ENCODE measurements at regions of chr3 and their contacts with region 1.

Region 1: DNA sequence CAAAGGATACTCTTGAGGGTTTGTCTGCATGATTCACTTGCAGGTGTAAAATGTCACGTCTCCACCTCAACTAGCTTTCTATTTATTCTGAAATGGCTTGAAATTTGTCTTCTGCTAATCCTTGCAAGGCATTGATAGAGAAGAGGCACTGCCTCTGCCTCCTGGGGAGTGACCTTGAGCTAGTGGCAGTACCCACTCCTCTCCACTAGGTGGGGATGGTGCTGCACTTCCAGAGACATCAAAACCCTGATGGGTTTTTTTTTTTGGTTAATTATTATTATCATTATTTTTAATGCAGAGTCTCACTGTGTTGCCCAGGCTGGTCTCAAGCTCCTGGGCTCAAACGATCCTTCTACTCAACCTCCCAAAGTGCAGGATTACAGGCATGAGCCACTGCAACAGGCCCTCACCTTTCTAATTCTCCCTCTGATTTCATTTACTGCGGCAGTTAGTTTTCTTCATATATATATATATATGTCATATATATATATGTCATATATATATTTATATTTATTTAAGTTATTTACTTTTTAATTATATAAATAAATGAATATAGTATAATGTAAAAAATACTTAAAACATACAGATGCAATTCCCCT is 117.6 kb upstream of the EIF1B start:
- DNase-seq: peak; percentile 85
- H3K4me3 Mint-ChIP-seq: no peak overlapping the region
- H3K27ac Mint-ChIP-seq: no peak overlapping the region
- H3K4me1 Mint-ChIP-seq: no peaks in the 10 kb centered on the region
- H3K27me3 Mint-ChIP-seq: peaks cover 10% of the 10 kb centered on the region

Region 2: DNA sequence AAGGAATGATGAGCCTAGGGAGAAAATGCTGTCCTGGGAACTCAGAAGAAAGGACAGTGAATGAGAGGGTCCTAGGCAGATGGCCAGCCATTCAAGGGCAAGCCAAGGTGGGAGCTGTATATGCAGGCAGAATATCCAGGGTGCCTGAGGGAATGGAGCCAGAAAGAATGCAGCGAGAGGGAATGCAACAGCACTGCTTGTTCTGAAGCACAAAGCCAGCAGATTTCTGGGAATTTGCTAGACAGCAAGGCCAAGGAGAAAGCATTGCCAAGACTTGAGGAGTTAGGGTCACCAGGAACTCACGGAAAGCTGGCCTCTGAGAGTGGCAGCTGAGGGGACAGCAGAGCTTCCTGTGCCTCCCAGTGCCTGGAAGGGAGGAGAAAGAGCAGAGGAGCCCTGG is 182.0 kb before region 1 on chr3:
- intact Hi-C with region 1: no loop called
- DNase-seq: no peak
- H3K4me3 Mint-ChIP-seq: no peak overlapping the region
- H3K27ac Mint-ChIP-seq: no peak overlapping the region
- H3K4me1 Mint-ChIP-seq: no peaks in the 10 kb centered on the region
- H3K27me3 Mint-ChIP-seq: no peaks in the 10 kb centered on the region

Region 3: GRCh38 chr3:40120806-40121205 is 71.1 kb before region 1 on chr3:
- intact Hi-C with region 1: no loop called
- DNase-seq: no peak
- H3K4me3 Mint-ChIP-seq: no peak overlapping the region
- H3K27ac Mint-ChIP-seq: no peak overlapping the region
- H3K4me1 Mint-ChIP-seq: no peaks in the 10 kb centered on the region
- H3K27me3 Mint-ChIP-seq: peaks cover 7% of the 10 kb centered on the region

Region 4: GRCh38 chr3:40317061-40317855 is 125.3 kb after region 1 on chr3:
- intact Hi-C with region 1: loop called (anchors 1 kb)
- DNase-seq: peak; percentile 83
- H3K4me3 Mint-ChIP-seq: no peak overlapping the region
- H3K27ac Mint-ChIP-seq: no peak overlapping the region
- H3K4me1 Mint-ChIP-seq: peaks cover 4% of the 10 kb centered on the region
- H3K27me3 Mint-ChIP-seq: peaks cover 6% of the 10 kb centered on the region

Measured in activated CD4-positive, alpha-beta T cell treated with anti-CD3 and anti-CD28 coated beads, Interleukin-2, amount 10 ng/mL, durations not matched to agents 24 days and 14 days (primary cell).